HEK293 (cell line): ENCODE measurements at regions of chr7 and their contacts with region 1.

Region 1: DNA sequence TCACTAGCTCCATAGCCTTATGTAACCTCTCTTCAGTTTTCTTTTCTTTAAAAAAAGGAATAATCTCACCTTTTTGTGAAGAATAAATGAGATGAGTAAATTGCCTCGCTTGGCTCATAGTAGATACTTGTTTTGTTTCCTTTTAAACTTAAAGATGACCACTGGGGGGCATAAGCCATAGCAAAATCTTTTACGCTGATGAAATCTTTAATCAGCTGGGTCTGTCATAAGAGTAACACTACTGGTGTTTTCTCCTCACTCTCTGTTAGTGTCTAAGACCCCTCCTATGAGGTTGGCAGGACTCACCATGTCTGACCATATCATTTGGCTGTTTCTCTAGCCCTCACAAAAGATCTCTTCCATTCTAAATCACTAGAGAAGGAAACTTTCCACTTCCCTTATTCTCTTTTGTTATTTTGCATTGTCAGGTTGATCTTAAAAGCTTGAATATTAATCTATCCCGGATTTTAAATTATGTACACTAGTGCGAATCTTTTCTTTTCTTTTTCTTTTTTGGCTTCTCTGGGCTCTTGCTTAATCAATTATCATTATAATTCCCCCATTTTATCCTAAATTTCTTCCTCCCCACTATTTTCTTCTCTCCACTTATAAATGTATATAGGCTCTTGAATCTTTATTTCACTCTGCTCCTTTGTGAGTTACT is 12.5 kb downstream of the STAG3 start:
- H3K4me3 ChIP-seq: no peak overlapping the region
- H3K27ac ChIP-seq: no peak overlapping the region
- H3K4me1 ChIP-seq: no peaks in the 10 kb centered on the region
- CTCF ChIP-seq: no peak

Region 2: DNA sequence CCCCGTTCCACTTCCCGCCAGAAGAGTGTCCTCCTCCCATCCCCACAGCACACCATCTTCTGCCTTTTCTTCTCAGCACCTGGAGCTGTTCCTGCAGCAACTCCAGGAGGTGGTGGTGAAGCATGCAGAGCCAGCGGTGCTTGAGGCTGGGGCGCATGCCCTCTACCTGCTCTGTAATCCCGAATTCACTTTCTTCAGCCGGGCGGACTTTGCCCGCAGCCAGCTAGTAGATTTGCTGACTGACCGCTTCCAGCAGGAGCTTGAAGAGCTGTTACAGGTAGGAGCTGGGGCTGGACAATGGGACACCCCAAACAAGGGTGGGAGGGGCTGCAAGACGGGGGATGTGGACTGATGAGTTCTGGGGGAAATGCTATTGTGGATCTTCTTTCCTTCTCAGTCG is 10.5 kb after region 1 on chr7:
- CTCF ChIA-PET with region 1: interaction called, 11 read pairs
- POLR2A ChIA-PET with region 1: interaction called, 4 read pairs
- H3K4me3 ChIP-seq: no peak overlapping the region
- H3K27ac ChIP-seq: no peak overlapping the region
- H3K4me1 ChIP-seq: no peaks in the 10 kb centered on the region
- CTCF ChIP-seq: no peak

Region 3: GRCh38 chr7:100360135-100360854 is 170.1 kb after region 1 on chr7:
- CTCF ChIA-PET with region 1: no interaction called
- POLR2A ChIA-PET with region 1: no interaction called
- H3K4me3 ChIP-seq: no peak overlapping the region
- H3K27ac ChIP-seq: no peak overlapping the region
- H3K4me1 ChIP-seq: no peaks in the 10 kb centered on the region
- CTCF ChIP-seq: no peak

Region 4: GRCh38 chr7:102044984-102045673 is 1854.9 kb after region 1 on chr7:
- CTCF ChIA-PET with region 1: no interaction called
- POLR2A ChIA-PET with region 1: no interaction called
- H3K4me3 ChIP-seq: no peak overlapping the region
- H3K27ac ChIP-seq: no peak overlapping the region
- H3K4me1 ChIP-seq: peaks cover 6% of the 10 kb centered on the region
- CTCF ChIP-seq: no peak